PC-3 (cell line): ENCODE measurements at regions of chr2 and their contacts with region 1.

Region 1: GRCh38 chr2:173749315-173749714 is 215.9 kb downstream of the SP3 start:
- DNase-seq: peak; percentile 74
- ATAC-seq: peak; percentile 64
- H3K4me3 ChIP-seq: no peak overlapping the region
- H3K27ac ChIP-seq: no peak overlapping the region
- H3K4me1 ChIP-seq: no peaks in the 10 kb centered on the region
- H3K27me3 ChIP-seq: no peaks in the 10 kb centered on the region
- CTCF ChIP-seq: peak; percentile 74

Region 2: DNA sequence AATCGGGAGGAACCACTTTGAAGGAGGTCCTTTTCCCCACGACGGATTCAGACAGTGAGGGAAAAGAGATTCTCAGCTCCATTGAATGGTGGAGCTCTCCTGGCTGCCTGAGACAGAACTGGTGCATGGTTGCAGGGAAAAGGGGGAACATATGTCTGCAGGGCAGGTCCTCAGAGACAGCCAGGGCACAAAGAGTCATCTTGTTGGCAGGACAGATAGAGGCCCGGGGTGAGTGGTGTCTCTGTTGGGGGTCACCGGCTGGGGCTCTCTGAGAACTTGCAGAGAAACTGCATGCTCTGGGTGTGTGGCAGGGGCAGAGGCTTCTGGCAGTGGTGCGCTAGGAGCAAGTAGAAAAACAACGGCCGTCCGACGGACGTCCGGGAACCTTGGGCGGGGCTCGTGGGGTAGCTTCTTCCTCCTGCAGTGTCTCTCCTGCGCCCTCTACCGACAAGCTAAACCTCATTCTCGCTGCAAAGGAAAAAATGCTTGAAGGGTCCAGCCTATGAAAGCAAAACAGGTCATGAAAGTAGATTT is 300.3 kb before region 1 on chr2:
- CTCF ChIA-PET with region 1: no interaction called
- POLR2A ChIA-PET with region 1: no interaction called
- intact Hi-C with region 1: loop called (anchors 5 kb)
- DNase-seq: peak; percentile 95
- ATAC-seq: peak; percentile 96
- H3K4me3 ChIP-seq: peak overlapping the region; percentile 60
- H3K27ac ChIP-seq: peak overlapping the region; percentile 35; the same call in 1 of the 2 replicates
- H3K4me1 ChIP-seq: peaks cover 11% of the 10 kb centered on the region; the same call in 1 of the 2 replicates
- H3K27me3 ChIP-seq: no peaks in the 10 kb centered on the region
- CTCF ChIP-seq: peak; percentile 86

Region 3: GRCh38 chr2:173667417-173667816 is 81.9 kb before region 1 on chr2:
- CTCF ChIA-PET with region 1: no interaction called
- POLR2A ChIA-PET with region 1: no interaction called
- intact Hi-C with region 1: loop called (anchors 5 kb)
- DNase-seq: peak; percentile 39
- ATAC-seq: peak; percentile 67
- H3K4me3 ChIP-seq: no peak overlapping the region
- H3K27ac ChIP-seq: no peak overlapping the region
- H3K4me1 ChIP-seq: peaks cover 13% of the 10 kb centered on the region
- H3K27me3 ChIP-seq: no peaks in the 10 kb centered on the region
- CTCF ChIP-seq: peak; percentile 57

Region 4: GRCh38 chr2:173716461-173717052 is 32.8 kb before region 1 on chr2:
- CTCF ChIA-PET with region 1: no interaction called
- POLR2A ChIA-PET with region 1: interaction called, 21 read pairs
- intact Hi-C with region 1: loop called (anchors 1 kb)
- DNase-seq: peak; percentile 97
- ATAC-seq: peak; percentile 81
- H3K4me3 ChIP-seq: 0 out of 2 replicates have a peak overlapping the region, but pooled peaks have one; percentile 8
- H3K27ac ChIP-seq: peak overlapping the region; percentile 96
- H3K4me1 ChIP-seq: peaks cover 43% of the 10 kb centered on the region
- H3K27me3 ChIP-seq: no peaks in the 10 kb centered on the region
- CTCF ChIP-seq: peak; percentile 42

Region 5: DNA sequence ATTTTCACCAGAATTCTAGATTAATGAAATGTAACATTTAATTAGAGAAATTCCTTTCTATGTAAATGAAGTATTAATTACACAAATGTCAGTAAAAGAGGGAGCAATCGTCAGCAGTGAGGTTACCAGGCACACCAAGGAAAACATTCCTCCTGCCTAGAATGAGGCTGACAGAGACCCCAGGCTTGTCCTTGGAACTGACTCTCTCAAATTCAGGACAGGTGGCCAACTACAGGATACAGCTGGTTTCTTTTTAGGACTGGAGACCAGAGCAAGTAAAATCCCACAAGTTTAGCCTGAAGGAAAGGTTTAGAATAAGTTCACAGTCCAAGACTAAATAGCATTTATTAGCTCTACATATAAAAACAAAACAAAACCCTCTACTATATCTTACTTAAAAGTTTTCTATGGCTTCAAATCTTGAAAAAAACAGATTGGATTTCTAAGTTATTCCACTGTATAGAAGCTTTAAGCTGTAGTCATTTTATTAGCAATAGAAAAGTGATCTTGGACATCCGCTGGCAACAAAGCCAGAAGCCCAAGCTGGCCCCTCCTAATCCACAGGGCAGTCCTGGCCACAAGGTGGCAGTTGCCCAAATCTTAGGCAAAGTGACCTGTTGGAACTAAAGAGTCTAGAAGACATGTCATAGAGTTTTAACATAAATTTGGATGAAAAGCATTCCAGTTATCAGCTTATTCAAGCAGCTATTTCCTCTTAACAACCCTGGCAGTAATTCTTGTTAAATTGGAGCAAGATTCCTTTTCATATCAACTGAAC is 134.9 kb after region 1 on chr2:
- CTCF ChIA-PET with region 1: no interaction called
- POLR2A ChIA-PET with region 1: no interaction called
- intact Hi-C with region 1: loop called (anchors 5 kb)
- DNase-seq: peak; percentile 78
- ATAC-seq: peak; percentile 91
- H3K4me3 ChIP-seq: no peak overlapping the region
- H3K27ac ChIP-seq: no peak overlapping the region
- H3K4me1 ChIP-seq: peaks cover 6% of the 10 kb centered on the region; the same call in 1 of the 2 replicates
- H3K27me3 ChIP-seq: no peaks in the 10 kb centered on the region
- CTCF ChIP-seq: peak; percentile 83

Region 6: DNA sequence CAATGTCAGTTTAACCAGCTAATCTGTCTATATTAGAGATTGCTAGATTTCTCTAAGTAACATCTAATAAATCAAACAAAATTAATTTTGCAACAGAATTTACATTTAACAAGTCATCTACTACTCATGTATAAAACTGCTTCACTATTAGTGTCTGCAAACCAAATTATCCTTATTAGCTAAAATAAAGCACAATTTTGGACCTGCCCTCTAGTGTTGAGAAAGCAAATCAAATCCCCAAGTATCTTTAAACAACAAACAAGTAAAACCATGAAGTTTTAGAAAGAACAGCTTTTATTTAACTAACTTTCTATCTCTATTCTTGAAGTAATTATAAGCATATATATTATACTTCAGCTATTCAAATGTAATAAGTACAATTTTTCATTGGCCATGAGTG is 329.0 kb after region 1 on chr2:
- CTCF ChIA-PET with region 1: no interaction called
- POLR2A ChIA-PET with region 1: no interaction called
- intact Hi-C with region 1: loop called (anchors 1 kb)
- DNase-seq: peak; percentile 31
- ATAC-seq: no peak
- H3K4me3 ChIP-seq: no peak overlapping the region
- H3K27ac ChIP-seq: no peak overlapping the region
- H3K4me1 ChIP-seq: no peaks in the 10 kb centered on the region
- H3K27me3 ChIP-seq: no peaks in the 10 kb centered on the region
- CTCF ChIP-seq: peak; percentile 75

Region 7: DNA sequence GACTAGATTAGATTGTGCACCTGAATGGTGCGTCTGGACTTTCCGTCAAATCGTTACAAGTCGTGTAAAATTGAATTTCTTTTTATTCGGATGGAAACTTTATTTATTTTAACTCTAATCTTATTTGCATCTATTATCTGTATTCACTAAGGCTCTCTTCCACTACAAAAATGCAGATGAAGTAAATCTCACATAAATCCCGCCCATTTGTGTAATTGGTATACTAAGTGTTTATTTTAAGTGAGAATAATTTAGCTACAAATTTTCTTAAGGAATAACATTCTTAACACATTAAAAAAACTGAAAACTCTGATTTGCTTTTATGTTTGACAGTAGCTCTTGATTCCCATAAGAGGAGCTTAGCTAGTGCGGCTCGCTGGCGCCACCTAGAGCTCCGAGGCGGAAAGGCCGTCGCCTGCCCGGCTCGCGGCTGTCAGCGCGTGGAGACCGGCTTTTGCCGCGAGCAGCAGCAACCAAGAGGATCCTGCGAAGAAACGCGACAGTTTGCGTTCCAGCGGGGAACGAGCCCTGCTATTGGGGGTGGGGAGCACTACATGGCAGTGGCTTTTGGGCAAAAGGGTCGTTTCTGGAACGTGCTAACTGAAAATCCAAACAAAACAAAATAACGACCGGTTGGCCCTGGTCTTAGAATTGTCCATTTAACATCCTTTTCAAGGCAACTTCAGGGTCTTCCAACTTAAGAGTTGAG is 592.1 kb after region 1 on chr2:
- CTCF ChIA-PET with region 1: no interaction called
- POLR2A ChIA-PET with region 1: no interaction called
- intact Hi-C with region 1: loop called (anchors 2 kb)
- DNase-seq: peak; percentile 93
- ATAC-seq: peak; percentile 68
- H3K4me3 ChIP-seq: peak overlapping the region; percentile 62
- H3K27ac ChIP-seq: peak overlapping the region; percentile 21
- H3K4me1 ChIP-seq: peaks cover 23% of the 10 kb centered on the region
- H3K27me3 ChIP-seq: no peaks in the 10 kb centered on the region
- CTCF ChIP-seq: peak; percentile 98